ENCODE measurements at regions of chr14 and their contacts with region 1.

Region 1: DNA sequence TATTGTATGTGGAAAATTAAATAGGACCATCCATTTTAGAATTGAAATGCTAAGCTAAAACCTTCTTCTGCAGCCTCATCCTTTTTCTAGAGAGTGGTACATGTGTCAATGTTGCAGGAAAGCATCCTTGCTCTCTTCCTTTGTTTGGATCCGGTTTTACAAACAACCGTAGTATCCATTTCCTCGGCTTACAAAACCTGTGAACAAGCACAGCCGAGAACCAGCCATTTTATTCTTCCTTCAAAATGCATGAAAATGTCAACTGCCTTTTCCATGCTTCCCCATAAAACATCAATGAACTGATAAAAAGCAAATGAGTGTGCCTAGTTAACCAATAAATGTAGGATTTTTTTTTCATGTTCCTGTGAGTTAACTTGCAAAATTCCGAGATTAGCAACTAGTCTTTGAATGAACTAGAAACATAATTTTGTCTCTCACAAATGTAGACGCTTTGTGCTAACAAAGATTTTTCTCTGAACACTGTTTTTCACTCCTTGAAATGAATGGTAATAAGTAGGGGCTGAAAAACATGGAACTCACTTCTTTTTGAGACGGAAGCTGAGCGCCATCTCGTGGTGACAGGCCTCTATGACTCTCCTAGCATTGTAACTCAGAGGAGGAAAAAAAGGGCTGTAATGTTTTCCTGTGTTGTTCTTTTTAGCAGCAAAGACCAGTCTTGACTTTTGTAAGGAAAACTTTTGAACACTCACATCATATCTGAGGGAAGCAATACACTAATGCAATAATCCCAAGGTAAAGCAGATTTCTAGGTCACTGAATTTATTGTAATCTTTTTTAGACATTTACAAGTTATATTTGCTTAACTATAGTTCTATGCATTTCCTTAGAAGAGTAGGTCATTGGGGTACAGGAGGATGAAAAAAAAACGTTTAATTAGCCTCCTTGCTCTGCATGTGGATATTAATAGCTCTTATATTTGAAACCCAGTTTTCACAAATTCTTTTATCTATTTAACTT is 157.4 kb upstream of the FOXG1 start:
- DNase-seq: peak; percentile 25
- ATAC-seq: no peak
- H3K4me3 ChIP-seq: no peak overlapping the region
- H3K27ac ChIP-seq: peak overlapping the region; percentile 55; the same call in 1 of the 2 replicates
- H3K4me1 ChIP-seq: no peaks in the 10 kb centered on the region
- H3K27me3 ChIP-seq: no peaks in the 10 kb centered on the region
- CTCF ChIP-seq: peak; percentile 70; the same call in 1 of the 2 replicates

Region 2: DNA sequence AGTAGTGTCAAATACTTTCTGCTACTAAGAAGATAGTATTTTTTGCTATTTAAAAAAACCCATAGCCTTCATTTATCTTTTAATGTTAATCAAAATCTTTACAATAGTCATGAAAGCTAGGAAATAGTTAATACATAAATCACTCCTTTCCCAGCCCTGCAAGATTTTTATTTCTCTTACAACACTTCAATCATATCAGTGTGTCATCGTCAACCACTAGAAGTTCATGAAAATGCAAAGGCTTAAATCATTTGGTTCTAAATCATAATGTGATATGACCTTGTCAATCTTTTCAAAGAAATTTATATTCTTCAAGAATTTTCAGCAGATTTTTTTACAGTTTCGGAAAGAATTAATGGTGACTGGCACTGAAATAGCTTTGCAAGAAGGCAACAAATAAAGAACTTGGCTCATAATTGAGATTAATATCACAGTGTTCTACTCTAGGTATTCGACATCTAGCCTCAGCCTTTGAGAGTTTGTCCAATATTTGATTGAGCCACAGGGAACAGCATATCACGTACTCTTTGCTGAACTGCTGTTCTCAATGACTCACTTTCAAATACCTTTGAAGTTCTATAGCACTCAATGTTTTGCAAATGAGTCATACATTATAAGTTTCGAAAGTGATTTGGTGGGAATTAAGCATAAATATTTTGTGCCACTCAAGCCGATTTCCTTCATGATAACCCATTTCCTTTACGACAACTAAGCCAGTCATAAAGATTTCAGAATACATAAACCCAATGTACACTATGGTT is 226.5 kb before region 1 on chr14:
- CTCF ChIA-PET with region 1: no interaction called
- POLR2A ChIA-PET with region 1: no interaction called
- in situ Hi-C with region 1: no loop called
- intact Hi-C with region 1: loop called (anchors 10 kb)
- DNase-seq: peak; percentile 35
- ATAC-seq: peak; percentile 100
- H3K4me3 ChIP-seq: no peak overlapping the region
- H3K27ac ChIP-seq: peak overlapping the region; percentile 78
- H3K4me1 ChIP-seq: no peaks in the 10 kb centered on the region
- H3K27me3 ChIP-seq: no peaks in the 10 kb centered on the region
- CTCF ChIP-seq: no peak

Measured in Panc1 (cell line).